Psoas muscle (tissue), 8 donors: ENCODE measurements at regions of chr12 and their contacts with region 1.

Region 1: DNA sequence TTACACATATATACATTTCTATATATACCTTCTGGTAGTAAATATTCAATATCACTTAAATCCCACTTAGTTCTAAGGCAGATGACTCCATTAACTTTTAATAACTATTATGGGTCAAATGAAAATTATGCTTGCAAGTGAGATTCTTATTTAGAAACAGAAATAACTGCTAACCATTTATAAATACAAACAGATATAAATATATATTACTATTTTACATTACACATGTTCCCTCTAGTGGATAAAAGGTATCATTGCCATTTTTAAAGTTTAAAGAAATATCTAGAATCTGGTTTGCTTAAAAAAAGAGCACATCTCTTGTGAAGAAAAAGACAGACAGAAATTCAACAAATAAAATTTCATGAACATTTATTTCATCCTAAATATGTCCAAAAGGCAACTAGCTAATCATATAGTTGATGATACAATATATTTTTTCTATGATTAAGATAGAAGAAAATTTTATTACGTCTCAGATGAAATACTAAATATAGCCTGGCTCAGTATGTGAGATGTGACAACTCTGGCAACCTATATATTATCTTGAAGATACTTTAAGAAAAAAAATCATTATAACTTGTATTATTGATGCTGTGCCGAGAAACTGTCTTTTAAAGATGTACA is 11.7 kb upstream of the RAD51AP1 start:
- DNase-seq: no peak
- ATAC-seq: peak in 1 of 4 donors; percentile 57
- H3K4me3 ChIP-seq: no peak overlapping the region
- H3K27ac ChIP-seq: no peak overlapping the region
- H3K4me1 ChIP-seq: no peaks in the 10 kb centered on the region
- H3K27me3 ChIP-seq: no peaks in the 10 kb centered on the region
- CTCF ChIP-seq: peak; percentile 68

Region 2: DNA sequence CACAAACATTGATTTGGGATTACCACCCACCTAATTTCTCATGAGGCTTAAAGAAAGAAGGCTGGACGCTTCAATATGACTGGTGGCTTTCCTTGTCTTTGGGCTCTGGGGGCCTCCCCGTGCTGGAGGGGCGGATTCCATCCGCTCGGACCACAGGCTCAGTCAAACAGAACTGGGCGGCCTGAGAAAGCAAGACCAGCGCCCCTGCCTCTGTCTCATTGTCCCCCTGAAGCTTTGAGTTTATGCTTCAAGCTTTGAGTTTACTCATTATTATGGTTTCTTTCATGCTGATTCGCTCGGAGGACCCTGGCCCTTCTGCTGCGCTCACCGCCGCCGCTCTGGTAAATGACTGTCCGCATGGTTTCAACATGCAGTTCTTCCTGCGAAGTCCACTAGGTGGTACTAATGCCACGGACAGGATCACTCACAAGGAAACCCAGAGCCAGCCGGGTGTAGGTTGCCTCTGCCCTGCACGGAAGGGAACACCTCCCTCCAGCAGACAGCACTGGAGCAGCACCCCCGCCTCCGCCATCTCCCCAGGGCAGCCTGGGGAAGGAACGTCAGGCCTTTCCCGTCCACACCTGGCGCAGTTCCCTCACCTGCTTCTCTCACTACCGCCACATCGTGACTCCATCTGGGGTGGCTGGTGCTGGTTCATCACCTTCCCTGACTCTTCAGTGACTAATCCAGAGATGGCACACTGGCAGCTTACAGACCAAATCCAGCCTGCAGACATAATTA is 219.3 kb before region 1 on chr12:
- intact Hi-C with region 1: loop called (anchors 5 kb)
- DNase-seq: peak; percentile 56 to 76
- ATAC-seq: peak; percentile 94 to 100 (median 96)
- H3K4me3 ChIP-seq: peak overlapping the region; percentile 48
- H3K27ac ChIP-seq: peak overlapping the region; percentile 1
- H3K4me1 ChIP-seq: peaks cover 5% of the 10 kb centered on the region
- H3K27me3 ChIP-seq: no peaks in the 10 kb centered on the region
- CTCF ChIP-seq: peak; percentile 76

Region 3: GRCh38 chr12:4353785-4354208 is 173.2 kb before region 1 on chr12:
- intact Hi-C with region 1: loop called (anchors 5 kb)
- DNase-seq: no peak
- ATAC-seq: peak in 2 of 4 donors; percentile 56 to 57
- H3K4me3 ChIP-seq: no peak overlapping the region
- H3K27ac ChIP-seq: no peak overlapping the region
- H3K4me1 ChIP-seq: no peaks in the 10 kb centered on the region
- H3K27me3 ChIP-seq: no peaks in the 10 kb centered on the region
- CTCF ChIP-seq: peak; percentile 58